ENCODE measurements at regions of chr22 and their contacts with region 1.

Region 1: DNA sequence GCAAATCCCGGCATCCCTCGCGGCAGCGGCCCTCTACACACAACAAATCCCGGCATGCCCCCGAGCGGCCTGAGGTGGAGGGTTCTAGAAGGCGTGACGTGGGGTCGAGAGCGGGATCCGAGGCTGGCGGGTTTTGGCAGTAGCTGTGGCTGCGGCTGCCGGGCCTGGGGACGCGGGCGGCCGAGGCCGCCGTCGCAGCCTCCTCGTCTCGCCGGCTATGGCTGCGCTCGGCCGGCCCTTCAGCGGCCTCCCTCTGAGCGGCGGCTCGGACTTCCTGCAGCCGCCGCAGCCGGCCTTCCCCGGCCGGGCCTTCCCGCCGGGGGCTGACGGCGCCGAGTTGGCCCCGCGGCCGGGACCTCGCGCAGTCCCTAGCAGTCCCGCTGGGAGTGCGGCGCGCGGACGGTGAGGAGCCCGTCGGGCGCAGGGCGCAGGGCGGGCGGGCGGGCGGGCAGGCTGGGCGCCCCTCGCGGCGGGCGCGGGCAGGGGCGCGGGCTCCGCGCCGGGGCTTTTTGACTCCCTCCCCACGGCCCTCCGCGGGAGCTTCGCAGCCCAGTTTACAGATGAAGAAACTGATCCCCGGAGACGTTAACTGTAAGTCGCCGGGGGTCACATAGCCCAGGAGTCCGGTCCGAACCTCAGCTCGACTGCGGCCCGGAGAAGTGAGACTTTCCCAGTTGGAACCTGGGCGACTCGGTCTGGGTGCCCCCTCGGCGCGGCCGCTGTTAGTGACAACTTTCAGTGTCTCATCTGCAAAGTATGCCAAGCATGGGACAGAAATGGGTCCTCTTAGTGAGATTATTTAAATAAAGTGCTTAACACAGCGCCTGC is at the start of gene CCDC117:
- DNase-seq: peak; percentile 89 to 95
- ATAC-seq: peak; percentile 90 to 97 (median 93)
- H3K4me3 ChIP-seq: peak within 1 kb of the TSS; percentile 55
- H3K4me3 Mint-ChIP-seq: peak within 1 kb of the TSS; percentile 98
- H3K27ac ChIP-seq: peak within 1 kb of the TSS; percentile 82
- H3K27ac Mint-ChIP-seq: peak within 1 kb of the TSS; percentile 96
- H3K4me1 ChIP-seq: peaks cover 30% of the 10 kb centered on the region
- H3K4me1 Mint-ChIP-seq: peaks cover 20 to 25% of the 10 kb centered on the region in 2 donors
- H3K27me3 ChIP-seq: no peaks in the 10 kb centered on the region
- H3K27me3 Mint-ChIP-seq: no peaks in the 10 kb centered on the region
- CTCF ChIP-seq: peak; percentile 32
- total RNA-seq, gene CCDC117: 26.3 to 26.9 (median 26.6) TPM

Region 2: DNA sequence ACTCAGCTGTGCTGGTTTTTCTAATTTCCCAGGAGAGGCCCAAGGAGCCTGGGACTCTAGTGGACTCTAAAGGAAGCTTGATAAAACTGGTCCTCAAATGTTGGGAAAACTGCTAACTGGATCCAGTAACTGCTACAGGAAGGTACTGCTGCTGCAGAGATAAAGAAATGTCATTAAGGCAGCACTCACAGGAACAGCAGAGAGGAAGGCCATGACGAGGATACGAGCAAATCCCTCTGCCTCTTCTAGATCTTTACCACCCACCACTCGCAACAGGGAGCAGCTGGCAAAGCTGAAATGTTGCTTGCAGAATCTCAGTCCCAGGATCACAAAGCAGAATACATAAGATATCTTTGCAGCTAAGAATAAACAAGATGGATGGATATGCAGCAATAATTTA is 116.7 kb before region 1 on chr22:
- intact Hi-C with region 1: no loop called
- DNase-seq: no peak
- ATAC-seq: no peak
- H3K4me3 ChIP-seq: no peak overlapping the region
- H3K4me3 Mint-ChIP-seq: no peak overlapping the region
- H3K27ac ChIP-seq: no peak overlapping the region
- H3K27ac Mint-ChIP-seq: no peak overlapping the region
- H3K4me1 ChIP-seq: no peaks in the 10 kb centered on the region
- H3K4me1 Mint-ChIP-seq: no peaks in the 10 kb centered on the region
- H3K27me3 ChIP-seq: peaks cover 12% of the 10 kb centered on the region
- H3K27me3 Mint-ChIP-seq: peaks cover 19 to 68% of the 10 kb centered on the region in 2 donors
- CTCF ChIP-seq: no peak

Region 3: DNA sequence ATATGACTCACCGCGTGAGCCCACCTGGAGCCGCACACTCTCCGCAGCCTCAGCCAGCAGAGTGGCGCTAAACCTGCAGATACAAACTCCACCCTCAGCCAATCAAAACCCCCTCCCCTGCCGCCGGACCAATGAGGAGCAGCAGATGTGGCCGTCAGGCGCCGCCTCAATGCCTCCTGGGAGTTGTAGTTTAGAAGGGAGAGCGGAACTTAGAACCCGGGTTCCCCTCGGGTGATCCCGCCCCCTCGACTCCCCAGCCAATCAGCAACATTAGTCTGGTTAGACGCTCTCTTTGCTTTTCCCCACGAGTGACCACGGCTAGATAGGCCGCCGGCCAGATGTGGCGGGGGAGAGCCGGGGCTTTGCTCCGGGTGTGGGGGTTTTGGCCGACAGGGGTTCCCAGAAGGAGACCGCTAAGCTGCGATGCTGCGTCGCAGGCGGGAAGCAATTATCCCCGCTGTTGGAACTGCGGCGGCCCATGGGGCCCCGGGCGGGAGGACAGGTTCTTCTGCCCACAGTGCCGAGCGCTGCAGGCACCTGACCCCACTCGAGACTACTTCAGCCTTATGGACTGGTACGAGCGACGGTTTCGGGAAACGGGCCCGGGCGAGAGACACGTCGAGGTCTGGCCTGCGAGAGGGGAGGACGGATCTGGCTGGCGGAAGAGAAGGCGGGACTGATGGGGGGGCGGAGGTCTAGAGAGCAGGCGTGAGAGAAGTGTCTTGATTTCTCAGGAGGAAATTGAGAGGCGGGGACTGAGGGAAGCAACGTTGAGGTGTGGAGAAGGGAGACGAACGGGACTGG is 30.9 kb before region 1 on chr22 and contains the starts of genes CHEK2 and HSCB:
- intact Hi-C with region 1: loop called (anchors 1 kb)
- DNase-seq: peak; percentile 91 to 98
- ATAC-seq: peak; percentile 94 to 98 (median 95)
- H3K4me3 ChIP-seq: peak within 1 kb of the TSS; percentile 74
- H3K4me3 Mint-ChIP-seq: peak within 1 kb of the TSS; percentile 89
- H3K27ac ChIP-seq: peak within 1 kb of the TSS; percentile 91
- H3K27ac Mint-ChIP-seq: peak within 1 kb of the TSS; percentile 92 to 97
- H3K4me1 ChIP-seq: peaks cover 22% of the 10 kb centered on the region
- H3K4me1 Mint-ChIP-seq: peaks cover 32 to 33% of the 10 kb centered on the region in 2 donors
- H3K27me3 ChIP-seq: no peaks in the 10 kb centered on the region
- H3K27me3 Mint-ChIP-seq: no peaks in the 10 kb centered on the region
- CTCF ChIP-seq: no peak
- total RNA-seq, gene CHEK2: 10.4 to 11.8 (median 11.4) TPM
- total RNA-seq, gene HSCB: 11.4 to 13.6 (median 12.3) TPM

Region 4: GRCh38 chr22:28800308-28801077 is 27.6 kb after region 1 on chr22 and contains the start of gene XBP1:
- intact Hi-C with region 1: loop called (anchors 2 kb)
- DNase-seq: peak; percentile 95 to 97
- ATAC-seq: peak; percentile 83 to 95 (median 92)
- H3K4me3 ChIP-seq: peak within 1 kb of the TSS; percentile 69
- H3K4me3 Mint-ChIP-seq: peak within 1 kb of the TSS; percentile 93
- H3K27ac ChIP-seq: peak within 1 kb of the TSS; percentile 92
- H3K27ac Mint-ChIP-seq: peak within 1 kb of the TSS; percentile 92 to 96
- H3K4me1 ChIP-seq: peaks cover 40% of the 10 kb centered on the region
- H3K4me1 Mint-ChIP-seq: peaks cover 56 to 58% of the 10 kb centered on the region in 2 donors
- H3K27me3 ChIP-seq: no peaks in the 10 kb centered on the region
- H3K27me3 Mint-ChIP-seq: no peaks in the 10 kb centered on the region
- CTCF ChIP-seq: no peak
- total RNA-seq, gene XBP1: 221 to 240 (median 224) TPM